CD8-positive, alpha-beta T cell (primary cell): ENCODE measurements at regions of chr15 and their contacts with region 1.

Region 1: DNA sequence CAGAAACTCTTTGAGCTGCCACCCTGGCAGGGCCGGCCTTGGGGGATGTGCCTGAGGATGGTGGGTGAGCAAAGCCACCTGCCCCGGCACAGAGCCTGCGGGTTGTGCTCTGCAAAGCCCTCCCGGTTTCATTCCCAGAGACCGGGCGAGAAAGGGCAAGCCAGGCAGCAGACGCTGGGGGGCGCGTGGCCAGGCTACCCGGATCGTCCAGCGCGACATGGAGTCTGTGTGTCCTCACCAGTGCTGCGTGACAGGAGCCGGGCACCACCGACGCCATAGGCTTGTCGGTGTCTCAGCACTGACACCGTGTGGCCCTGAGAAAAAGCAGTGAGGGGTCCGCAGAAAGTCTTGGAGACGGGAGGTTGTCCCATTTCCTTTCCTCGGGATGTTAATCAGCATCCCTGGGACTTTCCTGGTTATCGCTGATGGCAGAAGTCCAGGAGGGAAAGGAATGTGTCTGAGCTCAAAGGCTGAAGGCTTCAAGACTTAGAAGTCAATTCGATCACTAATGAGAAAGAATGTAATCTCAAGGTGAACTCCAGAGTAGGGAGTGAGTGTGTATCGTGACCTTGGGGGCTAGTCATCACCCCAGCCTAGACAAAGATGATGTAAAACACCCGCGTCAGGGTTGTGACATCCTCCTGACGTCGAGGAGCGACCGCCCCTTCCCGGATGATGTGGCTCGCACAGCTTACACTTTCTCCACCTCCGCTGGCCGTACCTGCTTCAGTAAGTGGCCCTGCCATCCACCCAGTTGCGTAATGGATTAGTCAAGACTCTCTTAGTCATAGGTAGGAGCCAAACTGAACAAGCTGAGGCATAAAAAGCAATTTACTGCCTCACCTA is 36.3 kb upstream of the PLA2G4E start:
- DNase-seq: peak in 6 of 9 experiments; percentile 32 to 76 (median 62)
- ATAC-seq: peak; percentile 78
- H3K4me3 ChIP-seq: peak overlapping the region; percentile 34 to 45
- H3K4me3 Mint-ChIP-seq: peak overlapping the region; percentile 64
- H3K27ac ChIP-seq: peak overlapping the region in 1 of 2 experiments; percentile 4
- H3K27ac Mint-ChIP-seq: peak overlapping the region; percentile 85
- H3K4me1 ChIP-seq: no peaks in the 10 kb centered on the region
- H3K4me1 Mint-ChIP-seq: peaks cover 7% of the 10 kb centered on the region
- H3K27me3 ChIP-seq: no peaks in the 10 kb centered on the region
- H3K27me3 Mint-ChIP-seq: peaks cover 29% of the 10 kb centered on the region
- CTCF ChIP-seq: peak; percentile 41

Region 2: DNA sequence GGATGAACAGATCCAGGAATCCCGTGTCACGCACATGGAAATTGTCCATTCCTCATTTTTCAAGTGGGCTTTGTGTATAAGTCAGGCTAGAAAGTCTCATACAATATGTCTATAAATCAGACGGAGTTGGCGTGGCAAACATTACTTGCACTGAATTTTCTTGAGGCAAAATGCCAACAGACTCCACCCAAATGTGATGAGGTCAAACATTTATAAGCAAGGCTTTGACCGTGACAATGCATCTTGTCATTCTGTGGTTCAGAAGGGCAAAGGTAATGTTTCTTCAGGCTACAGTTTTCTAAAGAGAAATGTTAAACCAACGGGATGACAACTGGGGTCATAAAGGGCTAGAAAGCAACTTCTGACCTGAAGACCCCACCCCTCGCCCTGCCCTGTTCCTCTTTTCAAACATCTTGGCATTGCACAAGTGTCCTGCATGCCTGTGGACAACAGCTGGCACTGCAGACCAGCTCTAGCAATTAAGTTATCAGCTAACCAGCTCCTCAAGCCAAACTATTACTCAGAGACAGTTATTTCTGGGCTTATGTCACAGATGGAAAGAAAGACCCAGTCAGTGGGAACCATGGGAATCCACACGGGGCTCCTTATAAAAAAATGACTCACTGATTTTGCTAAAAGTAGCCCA is 126.8 kb before region 1 on chr15:
- CTCF ChIA-PET with region 1: no interaction called
- POLR2A ChIA-PET with region 1: no interaction called
- intact Hi-C with region 1: loop called in 1 of 2 experiments (anchors 5 kb)
- DNase-seq: peak in 1 of 9 experiments; percentile 21
- ATAC-seq: no peak
- H3K4me3 ChIP-seq: no peak overlapping the region
- H3K4me3 Mint-ChIP-seq: no peak overlapping the region
- H3K27ac ChIP-seq: no peak overlapping the region
- H3K27ac Mint-ChIP-seq: no peak overlapping the region
- H3K4me1 ChIP-seq: peaks cover 30% of the 10 kb centered on the region
- H3K4me1 Mint-ChIP-seq: peaks cover 24% of the 10 kb centered on the region
- H3K27me3 ChIP-seq: no peaks in the 10 kb centered on the region
- H3K27me3 Mint-ChIP-seq: no peaks in the 10 kb centered on the region
- CTCF ChIP-seq: no peak

Region 3: DNA sequence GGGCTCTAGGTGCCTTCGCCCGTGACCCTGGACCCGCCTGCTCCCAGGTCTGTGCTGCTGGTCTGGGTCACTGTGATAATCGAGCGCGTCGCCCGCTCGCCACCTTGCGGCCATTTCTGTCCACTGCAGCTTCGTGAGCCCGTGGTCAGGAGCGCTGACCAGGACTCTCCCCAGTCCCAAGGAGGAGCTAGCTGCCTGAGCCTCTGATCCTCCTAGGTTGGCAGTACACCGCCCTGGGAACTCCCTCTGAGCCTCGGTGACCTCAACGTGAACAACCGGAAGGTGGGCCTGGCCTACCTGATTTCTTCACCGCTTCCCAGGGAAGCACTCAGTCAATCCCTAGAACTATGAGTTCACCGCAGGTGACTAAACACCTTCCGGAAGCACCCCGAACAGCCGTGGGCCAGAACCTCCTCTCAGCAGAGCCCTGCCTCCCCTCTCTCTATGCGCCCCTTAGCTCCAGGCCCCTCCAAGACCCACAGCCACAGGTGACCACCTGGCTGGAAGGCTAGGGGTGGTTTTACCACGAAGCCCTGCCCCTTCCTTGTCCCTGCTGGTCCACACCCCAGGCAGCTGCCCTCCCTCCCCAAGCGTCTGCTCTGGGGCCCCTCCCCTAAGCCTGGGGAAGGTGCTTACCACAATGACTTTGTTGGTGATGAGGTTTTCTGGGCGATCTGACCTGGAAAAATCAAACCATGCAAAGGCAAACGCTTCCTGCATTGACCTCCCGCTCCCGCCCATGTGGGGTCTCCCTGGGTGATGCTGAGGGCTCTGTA is 27.5 kb after region 1 on chr15:
- CTCF ChIA-PET with region 1: interaction called, 9 read pairs
- POLR2A ChIA-PET with region 1: no interaction called
- intact Hi-C with region 1: loop called in 1 of 2 experiments (anchors 1 kb)
- DNase-seq: peak in 8 of 9 experiments; percentile 14 to 67 (median 41)
- ATAC-seq: peak; percentile 51
- H3K4me3 ChIP-seq: no peak overlapping the region
- H3K4me3 Mint-ChIP-seq: no peak overlapping the region
- H3K27ac ChIP-seq: no peak overlapping the region
- H3K27ac Mint-ChIP-seq: no peak overlapping the region
- H3K4me1 ChIP-seq: peaks cover 6% of the 10 kb centered on the region
- H3K4me1 Mint-ChIP-seq: peaks cover 3% of the 10 kb centered on the region
- H3K27me3 ChIP-seq: no peaks in the 10 kb centered on the region
- H3K27me3 Mint-ChIP-seq: peaks cover 9% of the 10 kb centered on the region
- CTCF ChIP-seq: peak; percentile 83